Ascending aorta (tissue), 2 donors: ENCODE measurements at regions of chr11 and their contacts with region 1.

Region 1: GRCh38 chr11:34266090-34266912 is 91.5 kb downstream of the ABTB2 start:
- DNase-seq: peak in 1 of 2 donors; percentile 83
- H3K4me3 ChIP-seq: peak overlapping the region in 1 of 2 donors; percentile 3
- H3K27ac ChIP-seq: peak overlapping the region; percentile 61 to 67
- H3K4me1 ChIP-seq: peaks cover 3 to 37% of the 10 kb centered on the region in 2 donors
- H3K27me3 ChIP-seq: no peaks in the 10 kb centered on the region
- CTCF ChIP-seq: no peak

Region 2: DNA sequence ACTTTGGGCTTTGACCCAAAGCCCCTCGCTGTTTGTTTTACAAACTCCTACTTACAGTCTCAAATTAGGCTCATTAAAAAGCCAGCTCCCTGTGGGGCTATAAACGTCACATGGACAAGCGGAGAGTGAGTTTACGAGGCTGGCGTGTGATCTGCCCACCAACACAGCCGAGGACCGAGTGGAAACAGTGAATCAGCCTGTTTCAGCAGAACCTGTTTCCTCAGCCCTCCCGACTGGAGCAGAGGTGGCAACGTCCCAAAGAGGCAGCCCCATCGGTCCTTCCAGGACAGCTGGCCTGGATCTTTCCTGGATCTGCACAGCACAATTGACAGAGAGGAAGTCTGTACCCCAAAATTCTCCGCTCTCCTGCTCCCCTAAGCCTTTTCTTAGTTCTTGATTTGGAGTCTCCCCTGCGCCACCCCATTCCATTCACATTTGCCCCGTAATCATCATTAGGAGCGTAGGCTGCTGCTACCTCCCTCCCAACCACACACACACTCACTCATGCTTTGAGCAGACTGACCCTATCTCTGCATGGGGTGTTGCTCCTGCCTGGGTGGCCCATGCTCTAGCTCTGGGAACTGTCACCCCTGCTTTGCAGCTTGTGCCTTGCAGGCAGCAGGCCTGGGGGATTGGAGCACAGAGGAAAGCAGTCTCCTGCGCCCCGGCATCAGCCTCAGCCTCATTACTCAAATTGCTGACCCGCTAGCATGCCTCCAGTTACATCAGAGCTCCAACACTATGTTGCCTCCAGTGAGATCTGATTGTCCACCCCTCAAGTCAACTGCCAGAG is 43.1 kb before region 1 on chr11:
- intact Hi-C with region 1: loop called (anchors 5 kb)
- DNase-seq: peak; percentile 39 to 88
- H3K4me3 ChIP-seq: no peak overlapping the region
- H3K27ac ChIP-seq: peak overlapping the region; percentile 75 to 82
- H3K4me1 ChIP-seq: peaks cover 5 to 13% of the 10 kb centered on the region in 2 donors
- H3K27me3 ChIP-seq: no peaks in the 10 kb centered on the region
- CTCF ChIP-seq: no peak

Region 3: DNA sequence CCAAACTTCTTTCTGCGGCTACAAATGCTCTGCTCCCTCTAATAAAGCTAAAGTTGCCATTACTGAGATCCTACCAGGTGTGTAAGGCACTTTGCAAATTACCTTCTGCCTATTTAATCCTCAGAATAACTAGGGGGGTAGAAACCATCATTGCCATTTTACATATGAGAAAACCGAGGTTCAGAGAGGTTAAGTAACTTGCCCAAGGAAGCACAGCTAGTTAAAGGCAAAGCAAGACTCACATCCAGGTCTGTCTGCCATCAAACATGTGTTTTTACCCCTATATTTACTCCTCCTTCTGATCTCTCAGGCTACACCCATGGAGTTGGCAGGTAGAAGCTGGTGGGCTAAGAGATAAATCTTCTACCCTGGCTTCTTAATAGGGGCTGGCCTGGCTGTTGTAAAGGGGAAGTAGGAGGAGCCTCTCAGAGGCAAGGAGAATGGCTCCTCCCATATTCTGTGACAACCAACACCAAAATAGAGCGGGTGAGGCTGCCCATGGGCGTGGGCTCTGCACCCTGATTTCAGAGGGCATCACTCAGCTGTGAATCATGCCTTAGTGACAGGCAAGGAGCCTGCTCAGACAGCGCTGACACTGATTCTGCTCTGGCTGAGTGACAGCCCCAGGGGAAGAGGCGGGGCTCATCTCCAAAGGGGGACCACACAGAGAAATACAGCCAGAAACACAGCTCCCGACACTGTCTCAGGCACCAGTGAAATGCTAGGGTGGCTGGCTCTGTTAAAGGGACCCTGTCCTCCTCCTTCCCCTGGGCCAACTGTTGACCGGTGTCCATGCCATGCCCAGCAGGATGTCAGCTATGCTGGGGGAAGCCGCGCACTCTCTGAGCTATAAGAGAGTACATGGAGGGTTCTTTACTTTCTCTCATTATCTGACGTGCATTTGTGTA is 15.3 kb before region 1 on chr11:
- intact Hi-C with region 1: loop called (anchors 2 kb)
- DNase-seq: peak; percentile 37 to 87
- H3K4me3 ChIP-seq: peak overlapping the region; percentile 11 to 50
- H3K27ac ChIP-seq: peak overlapping the region; percentile 78 to 86
- H3K4me1 ChIP-seq: peaks cover 3 to 11% of the 10 kb centered on the region in 2 donors
- H3K27me3 ChIP-seq: no peaks in the 10 kb centered on the region
- CTCF ChIP-seq: no peak